ENCODE measurements at regions of chr10 and their contacts with region 1.

Region 1: DNA sequence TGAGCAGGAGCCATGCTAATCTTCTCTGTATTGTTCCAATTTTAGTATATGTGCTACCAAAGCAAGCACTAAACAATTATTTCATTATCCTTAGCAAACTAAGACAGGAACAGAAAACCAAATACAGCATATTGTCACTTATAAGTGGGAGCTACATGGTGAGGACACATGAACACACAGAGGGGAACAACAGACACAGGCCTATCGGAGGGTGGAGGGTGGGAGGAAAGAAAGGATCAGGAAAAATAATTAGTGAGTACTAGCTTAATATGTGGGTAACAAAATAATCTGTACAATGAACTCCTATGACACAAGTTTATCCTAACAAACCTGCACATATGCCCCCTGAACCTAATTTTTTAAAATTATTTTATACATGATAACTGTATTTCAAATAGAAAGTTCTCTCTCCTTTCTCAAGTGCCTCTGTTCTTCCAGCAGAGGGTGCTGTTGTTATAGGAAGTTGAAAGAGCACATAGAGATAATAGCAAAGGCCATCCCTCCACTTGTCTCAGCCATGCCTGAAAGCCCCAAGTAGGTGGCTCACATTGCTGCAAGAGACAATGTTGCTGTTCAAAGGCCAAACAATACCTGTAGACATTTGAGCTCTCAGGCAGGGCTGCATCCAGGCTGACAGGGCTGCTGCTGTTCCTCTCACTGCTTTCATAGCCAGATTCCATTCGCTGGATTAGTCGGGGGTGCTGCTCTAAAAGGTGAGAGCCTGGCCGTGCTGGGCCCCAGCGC is 33.4 kb upstream of the PPP3CB start:
- DNase-seq: no peak
- H3K4me3 ChIP-seq: no peak overlapping the region
- H3K27ac ChIP-seq: no peak overlapping the region
- H3K4me1 ChIP-seq: no peaks in the 10 kb centered on the region
- H3K27me3 ChIP-seq: no peaks in the 10 kb centered on the region
- CTCF ChIP-seq: peak; percentile 60 to 95 (median 92)
- POLR2A ChIP-seq: no peak

Region 2: GRCh38 chr10:73517271-73517877 is 11.9 kb before region 1 on chr10:
- intact Hi-C with region 1: no loop called
- DNase-seq: no peak
- H3K4me3 ChIP-seq: no peak overlapping the region
- H3K27ac ChIP-seq: no peak overlapping the region
- H3K4me1 ChIP-seq: no peaks in the 10 kb centered on the region
- H3K27me3 ChIP-seq: no peaks in the 10 kb centered on the region
- CTCF ChIP-seq: no peak
- POLR2A ChIP-seq: no peak

Region 3: GRCh38 chr10:73641328-73642060 is 112.2 kb after region 1 on chr10 and contains the start of gene MYOZ1:
- intact Hi-C with region 1: loop called (anchors 2 kb)
- DNase-seq: no peak
- H3K4me3 ChIP-seq: no peak within 1 kb of the TSS
- H3K27ac ChIP-seq: no peak within 1 kb of the TSS
- H3K4me1 ChIP-seq: no peaks in the 10 kb centered on the region
- H3K27me3 ChIP-seq: no peaks in the 10 kb centered on the region
- CTCF ChIP-seq: no peak
- POLR2A ChIP-seq: no peak
- total RNA-seq, gene MYOZ1: not detected